ENCODE measurements at regions of chr3 and their contacts with region 1.

Region 1: GRCh38 chr3:197936819-197937384 is 13.1 kb upstream of the RPL35A start:
- DNase-seq: no peak
- ATAC-seq: no peak
- H3K4me3 ChIP-seq: no peak overlapping the region
- H3K27ac ChIP-seq: no peak overlapping the region
- H3K4me1 ChIP-seq: no peaks in the 10 kb centered on the region
- H3K27me3 ChIP-seq: no peaks in the 10 kb centered on the region
- CTCF ChIP-seq: no peak

Region 2: GRCh38 chr3:197878427-197878826 is 58.5 kb before region 1 on chr3:
- CTCF ChIA-PET with region 1: no interaction called
- POLR2A ChIA-PET with region 1: interaction called, 11 read pairs
- in situ Hi-C with region 1: no loop called
- intact Hi-C with region 1: no loop called
- DNase-seq: no peak
- ATAC-seq: no peak
- H3K4me3 ChIP-seq: no peak overlapping the region
- H3K27ac ChIP-seq: no peak overlapping the region
- H3K4me1 ChIP-seq: no peaks in the 10 kb centered on the region
- H3K27me3 ChIP-seq: no peaks in the 10 kb centered on the region
- CTCF ChIP-seq: no peak

Region 3: GRCh38 chr3:198071602-198072285 is 134.8 kb after region 1 on chr3:
- CTCF ChIA-PET with region 1: no interaction called
- POLR2A ChIA-PET with region 1: no interaction called
- in situ Hi-C with region 1: no loop called
- intact Hi-C with region 1: no loop called
- DNase-seq: peak; percentile 93
- ATAC-seq: peak; percentile 99
- H3K4me3 ChIP-seq: no peak overlapping the region
- H3K27ac ChIP-seq: no peak overlapping the region
- H3K4me1 ChIP-seq: peaks cover 9% of the 10 kb centered on the region
- H3K27me3 ChIP-seq: no peaks in the 10 kb centered on the region
- CTCF ChIP-seq: peak; percentile 21; the same call in 1 of the 2 replicates

Measured in Panc1 (cell line).